ENCODE measurements at regions of chr21 and their contacts with region 1.

Region 1: DNA sequence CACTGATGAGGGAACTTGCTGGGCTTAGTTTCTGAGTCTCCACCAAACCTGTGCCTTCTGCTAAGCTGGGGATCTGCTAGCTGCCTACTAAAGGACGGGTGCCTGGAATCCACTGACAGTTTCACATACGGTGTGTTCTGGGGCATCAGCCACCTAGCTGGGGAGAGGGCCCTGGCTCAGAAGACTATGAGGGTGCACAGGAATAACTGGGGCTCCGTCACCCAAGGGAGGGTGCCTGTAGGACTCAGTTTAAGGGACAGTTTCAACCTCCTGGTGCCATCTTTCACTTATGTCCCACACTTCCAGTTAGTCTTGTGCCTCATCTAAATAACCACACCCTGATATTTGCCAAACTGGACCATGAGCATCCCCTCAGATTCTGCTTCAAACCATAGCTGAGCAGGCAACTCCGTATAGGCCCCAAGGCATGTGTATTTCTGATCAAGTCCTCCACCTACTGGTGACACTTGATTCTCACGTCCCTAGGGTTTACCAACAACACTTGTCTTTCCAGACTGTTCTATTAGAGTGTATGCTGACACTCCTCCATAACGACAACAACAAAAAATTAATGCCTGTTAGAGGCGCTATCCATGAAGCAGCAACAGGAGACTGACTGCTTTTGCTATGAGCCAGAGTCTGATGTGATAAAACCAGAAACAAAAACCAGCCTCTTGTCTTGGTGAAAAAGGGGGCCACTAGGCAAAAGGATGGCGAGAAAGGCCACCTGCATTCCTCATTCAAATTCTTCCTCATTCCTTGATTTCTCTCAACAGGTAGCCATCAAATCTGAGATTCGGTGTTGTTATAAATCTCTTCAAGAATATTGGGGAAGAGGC is 55.0 kb upstream of the PAXBP1 start:
- H3K4me3 ChIP-seq: no peak overlapping the region
- H3K27ac ChIP-seq: no peak overlapping the region
- H3K4me1 ChIP-seq: no peaks in the 10 kb centered on the region
- CTCF ChIP-seq: peak; percentile 80

Region 2: DNA sequence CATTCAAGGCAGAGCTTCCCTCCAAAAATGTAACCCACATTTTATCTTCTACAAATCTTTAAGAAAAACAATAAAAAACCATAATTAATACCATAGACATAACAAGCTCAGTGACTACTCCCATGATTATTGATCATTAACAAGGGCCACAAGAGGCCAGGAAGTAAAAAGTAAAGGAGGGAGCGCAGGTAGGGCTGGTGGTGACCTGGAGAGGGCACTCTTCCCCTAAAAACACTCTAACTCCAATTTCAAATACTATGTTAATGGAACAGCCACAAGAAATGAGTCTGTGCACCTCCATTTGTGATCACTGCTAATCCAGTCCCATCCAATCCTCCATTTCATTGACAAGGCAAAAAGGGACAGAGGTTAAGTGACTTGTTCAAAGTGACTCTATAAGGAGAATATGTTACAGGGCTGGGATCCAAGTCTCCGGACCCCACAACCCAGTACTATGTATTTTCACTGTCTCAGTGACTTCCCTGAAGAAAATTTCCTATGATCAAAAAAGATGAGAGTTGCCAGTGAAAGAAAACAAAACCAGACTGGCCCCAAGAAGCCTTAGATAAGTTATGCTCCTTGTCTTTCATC is 173.1 kb before region 1 on chr21:
- CTCF ChIA-PET with region 1: interaction called, 21 read pairs
- POLR2A ChIA-PET with region 1: no interaction called
- H3K4me3 ChIP-seq: no peak overlapping the region
- H3K27ac ChIP-seq: no peak overlapping the region
- H3K4me1 ChIP-seq: no peaks in the 10 kb centered on the region
- CTCF ChIP-seq: no peak

Region 3: GRCh38 chr21:32753818-32754610 is 72.5 kb before region 1 on chr21:
- CTCF ChIA-PET with region 1: interaction called, 14 read pairs
- POLR2A ChIA-PET with region 1: no interaction called
- H3K4me3 ChIP-seq: no peak overlapping the region
- H3K27ac ChIP-seq: no peak overlapping the region
- H3K4me1 ChIP-seq: no peaks in the 10 kb centered on the region
- CTCF ChIP-seq: no peak

Region 4: GRCh38 chr21:32782698-32783097 is 43.9 kb before region 1 on chr21:
- CTCF ChIA-PET with region 1: interaction called, 12 read pairs
- POLR2A ChIA-PET with region 1: no interaction called
- H3K4me3 ChIP-seq: no peak overlapping the region
- H3K27ac ChIP-seq: no peak overlapping the region
- H3K4me1 ChIP-seq: no peaks in the 10 kb centered on the region
- CTCF ChIP-seq: no peak

Region 5: DNA sequence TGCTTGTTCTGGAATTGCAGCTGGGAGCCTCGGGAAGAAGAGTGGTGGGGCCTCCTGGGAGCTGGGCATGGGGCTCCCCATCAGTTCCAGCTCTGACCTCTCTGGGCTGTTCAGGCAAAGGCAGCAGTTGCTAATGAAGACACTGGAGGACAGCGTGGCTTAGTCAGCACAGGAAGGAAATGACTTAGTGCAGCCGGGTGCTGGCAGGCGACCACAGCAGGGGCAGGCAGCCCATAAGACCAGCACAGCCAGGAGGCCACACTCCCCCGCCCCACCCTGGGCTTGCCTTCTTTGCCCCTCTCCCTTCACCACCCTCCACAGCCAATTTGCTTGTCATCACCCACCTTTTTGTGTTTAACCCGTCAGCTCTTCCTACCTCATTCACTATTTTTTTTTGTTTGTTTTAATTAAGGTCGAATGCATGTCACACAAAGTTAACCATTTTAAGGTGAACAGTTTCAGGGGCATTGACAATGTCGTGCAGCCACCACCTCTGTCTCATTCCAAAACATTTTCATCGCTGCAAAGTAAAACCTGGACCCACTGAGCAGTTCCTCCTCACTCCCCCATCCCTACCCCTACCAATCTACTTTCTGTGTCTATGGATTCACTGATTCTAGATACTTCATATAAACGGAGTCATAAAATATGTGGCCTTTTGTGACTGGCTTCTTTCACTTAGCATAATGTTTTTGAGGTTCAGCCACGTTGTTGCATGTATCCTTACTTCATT is 210.0 kb after region 1 on chr21:
- CTCF ChIA-PET with region 1: no interaction called
- POLR2A ChIA-PET with region 1: no interaction called
- H3K4me3 ChIP-seq: no peak overlapping the region
- H3K27ac ChIP-seq: no peak overlapping the region
- H3K4me1 ChIP-seq: no peaks in the 10 kb centered on the region
- CTCF ChIP-seq: no peak

Measured in HEK293 (cell line).